WTC11 (cell line): ENCODE measurements at regions of chr10 and their contacts with region 1.

Region 1: DNA sequence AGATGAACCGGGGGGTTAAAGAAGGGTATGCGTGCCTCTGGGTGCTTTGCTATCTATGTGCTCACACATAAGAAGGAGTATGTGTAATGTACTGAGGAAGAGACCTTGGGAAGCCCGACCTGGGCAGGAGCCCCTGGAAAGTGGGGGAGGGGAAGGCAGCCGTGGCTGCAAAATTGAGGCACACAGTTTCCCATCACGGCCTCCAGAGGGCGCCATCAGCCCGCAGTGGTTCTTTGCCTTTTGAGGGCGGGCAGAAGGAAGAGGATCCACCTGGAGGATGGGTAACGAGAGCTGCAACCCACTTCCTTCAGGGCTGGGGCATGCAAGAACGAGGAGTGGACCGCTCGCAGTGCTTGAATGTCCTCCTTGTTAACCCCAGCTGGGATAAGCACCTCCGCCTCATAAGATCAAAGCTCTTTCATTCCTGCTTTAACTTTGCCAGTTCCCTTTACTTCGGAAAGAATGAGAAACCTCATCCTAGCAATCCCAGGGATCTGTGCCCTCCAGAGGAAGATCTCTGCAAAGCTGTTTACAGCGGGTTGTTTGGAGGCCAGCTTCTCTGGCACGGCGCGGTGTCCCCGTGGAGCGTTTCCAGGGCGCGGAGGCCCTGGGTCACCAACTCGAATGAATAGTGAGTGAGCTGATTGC is 77.9 kb downstream of the PCGF5 start:
- DNase-seq: peak; percentile 86
- ATAC-seq: peak; percentile 95
- H3K4me3 Mint-ChIP-seq: peak overlapping the region; percentile 63
- H3K27ac Mint-ChIP-seq: peak overlapping the region; percentile 47; the same call in 1 of the 2 replicates
- H3K4me1 Mint-ChIP-seq: peaks cover 19% of the 10 kb centered on the region
- H3K27me3 Mint-ChIP-seq: no peaks in the 10 kb centered on the region; the same call in 1 of the 2 replicates
- CTCF ChIP-seq: peak; percentile 86

Region 2: GRCh38 chr10:91088300-91089140 is 209.8 kb before region 1 on chr10:
- CTCF ChIA-PET with region 1: interaction called, 11 read pairs
- POLR2A ChIA-PET with region 1: no interaction called
- DNase-seq: no peak
- ATAC-seq: peak; percentile 67
- H3K4me3 Mint-ChIP-seq: no peak overlapping the region
- H3K27ac Mint-ChIP-seq: no peak overlapping the region
- H3K4me1 Mint-ChIP-seq: no peaks in the 10 kb centered on the region
- H3K27me3 Mint-ChIP-seq: peaks cover 2% of the 10 kb centered on the region
- CTCF ChIP-seq: no peak

Region 3: DNA sequence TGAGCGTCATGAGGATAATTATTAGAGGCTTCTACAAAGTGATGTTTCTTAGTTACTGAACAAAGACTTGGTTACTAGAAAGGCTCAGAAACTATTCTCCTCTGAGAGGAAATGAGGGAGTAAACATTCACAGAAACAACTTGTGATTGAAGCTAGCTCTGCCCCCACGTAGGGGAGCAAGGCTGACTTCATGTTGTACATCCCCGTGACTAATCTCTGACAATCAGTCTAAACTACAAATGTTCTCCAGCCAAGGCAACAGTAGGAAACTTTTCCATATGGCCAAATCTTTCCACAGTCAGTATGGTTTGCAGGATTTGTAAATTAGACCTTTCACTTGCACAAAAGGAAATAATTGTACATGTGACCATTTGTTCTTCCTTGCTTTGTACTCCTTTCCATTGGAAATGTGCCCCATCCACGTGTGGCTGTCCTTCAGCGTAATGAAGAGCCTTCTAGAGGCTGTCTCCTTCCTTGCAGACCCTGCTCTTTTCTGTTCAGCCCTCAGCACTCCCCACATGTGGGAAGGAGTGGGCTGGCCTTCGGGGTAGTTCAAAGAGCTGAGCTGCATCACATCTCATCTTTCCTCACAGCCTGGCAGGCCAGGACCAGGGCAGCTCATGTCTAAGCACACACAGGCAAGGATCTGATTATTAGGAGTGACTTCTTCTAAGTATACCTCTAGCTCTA is 15.6 kb after region 1 on chr10:
- CTCF ChIA-PET with region 1: interaction called, 22 read pairs
- POLR2A ChIA-PET with region 1: interaction called, 3 read pairs
- DNase-seq: no peak
- ATAC-seq: peak; percentile 26; the same call in 1 of the 2 replicates
- H3K4me3 Mint-ChIP-seq: no peak overlapping the region
- H3K27ac Mint-ChIP-seq: no peak overlapping the region
- H3K4me1 Mint-ChIP-seq: no peaks in the 10 kb centered on the region
- H3K27me3 Mint-ChIP-seq: 0 out of 2 replicates have a peak, but pooled peaks cover 2% of the 10 kb centered on the region
- CTCF ChIP-seq: no peak

Region 4: GRCh38 chr10:91328320-91328984 is 30.1 kb after region 1 on chr10:
- CTCF ChIA-PET with region 1: no interaction called
- POLR2A ChIA-PET with region 1: no interaction called
- DNase-seq: no peak
- ATAC-seq: no peak
- H3K4me3 Mint-ChIP-seq: no peak overlapping the region
- H3K27ac Mint-ChIP-seq: no peak overlapping the region
- H3K4me1 Mint-ChIP-seq: no peaks in the 10 kb centered on the region
- H3K27me3 Mint-ChIP-seq: peaks cover 5% of the 10 kb centered on the region; the same call in 1 of the 2 replicates
- CTCF ChIP-seq: no peak

Region 5: DNA sequence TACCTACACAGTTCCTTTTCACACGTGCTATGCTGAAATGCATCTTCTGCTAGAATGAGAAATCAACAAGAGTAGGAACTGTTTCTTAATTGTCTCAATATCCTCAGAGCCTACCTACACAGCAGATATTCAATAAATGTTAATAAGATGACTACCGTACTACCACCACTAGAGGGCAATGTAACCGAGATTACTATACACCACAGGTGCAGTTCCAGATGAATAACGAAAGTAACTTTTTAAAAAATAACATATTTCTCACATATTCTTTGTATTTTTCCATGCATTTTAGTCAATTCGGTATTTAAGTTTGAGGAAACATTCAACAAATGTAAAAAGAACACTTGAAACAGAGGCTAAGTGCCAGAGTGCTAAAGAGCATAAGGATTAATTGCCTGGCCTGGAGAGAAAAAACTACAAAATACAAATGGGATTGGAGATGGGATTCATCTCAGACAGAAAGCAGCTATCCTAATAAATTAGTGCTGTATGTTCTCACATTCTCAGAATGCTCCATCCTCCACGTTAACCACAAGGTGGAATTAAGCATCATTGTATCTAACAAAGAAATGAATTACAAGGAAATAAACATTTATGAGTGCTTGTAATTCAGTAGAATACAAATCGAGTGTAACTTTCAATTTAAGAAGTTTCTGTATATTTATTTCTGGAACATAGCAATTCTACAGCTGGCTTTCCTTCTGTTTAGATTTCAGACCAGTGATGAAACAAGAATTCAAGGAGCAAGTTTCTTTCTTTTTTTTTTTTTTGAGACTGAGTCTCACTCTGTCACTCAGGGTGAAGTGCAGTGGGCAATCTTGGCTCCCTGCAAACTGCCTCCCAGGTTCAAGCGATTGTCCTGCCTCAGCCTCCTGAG is 91.5 kb after region 1 on chr10:
- CTCF ChIA-PET with region 1: interaction called, 10 read pairs
- POLR2A ChIA-PET with region 1: no interaction called
- DNase-seq: no peak
- ATAC-seq: peak; percentile 86
- H3K4me3 Mint-ChIP-seq: no peak overlapping the region
- H3K27ac Mint-ChIP-seq: no peak overlapping the region
- H3K4me1 Mint-ChIP-seq: 0 out of 2 replicates have a peak, but pooled peaks cover 4% of the 10 kb centered on the region
- H3K27me3 Mint-ChIP-seq: no peaks in the 10 kb centered on the region
- CTCF ChIP-seq: peak; percentile 51; the same call in 1 of the 2 replicates

Region 6: DNA sequence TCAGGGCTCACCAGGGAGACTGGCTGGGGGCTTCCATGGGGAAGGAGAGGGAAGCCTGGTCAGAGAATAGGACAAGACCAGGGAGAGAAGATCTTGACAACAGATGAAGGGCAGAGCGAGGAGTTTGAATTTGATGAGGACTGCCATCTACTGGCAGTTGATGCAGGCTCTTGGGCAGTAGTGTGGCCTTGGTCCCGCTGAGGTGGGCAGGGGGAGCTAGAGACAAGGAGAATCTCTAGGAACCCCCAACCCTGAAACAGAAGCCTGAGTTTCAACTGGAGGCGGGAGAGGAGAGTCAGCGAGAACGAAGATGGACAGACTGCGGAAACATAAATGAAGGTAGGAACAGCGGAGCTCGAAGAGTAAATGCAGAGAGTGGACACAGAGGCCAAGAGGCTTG is 253.5 kb after region 1 on chr10:
- CTCF ChIA-PET with region 1: interaction called, 62 read pairs
- POLR2A ChIA-PET with region 1: no interaction called
- DNase-seq: peak; percentile 73
- ATAC-seq: peak; percentile 97
- H3K4me3 Mint-ChIP-seq: peak overlapping the region; percentile 17; the same call in 1 of the 2 replicates
- H3K27ac Mint-ChIP-seq: no peak overlapping the region
- H3K4me1 Mint-ChIP-seq: peaks cover 9% of the 10 kb centered on the region
- H3K27me3 Mint-ChIP-seq: peaks cover 7% of the 10 kb centered on the region; the same call in 1 of the 2 replicates
- CTCF ChIP-seq: peak; percentile 46; the same call in 1 of the 2 replicates

Region 7: DNA sequence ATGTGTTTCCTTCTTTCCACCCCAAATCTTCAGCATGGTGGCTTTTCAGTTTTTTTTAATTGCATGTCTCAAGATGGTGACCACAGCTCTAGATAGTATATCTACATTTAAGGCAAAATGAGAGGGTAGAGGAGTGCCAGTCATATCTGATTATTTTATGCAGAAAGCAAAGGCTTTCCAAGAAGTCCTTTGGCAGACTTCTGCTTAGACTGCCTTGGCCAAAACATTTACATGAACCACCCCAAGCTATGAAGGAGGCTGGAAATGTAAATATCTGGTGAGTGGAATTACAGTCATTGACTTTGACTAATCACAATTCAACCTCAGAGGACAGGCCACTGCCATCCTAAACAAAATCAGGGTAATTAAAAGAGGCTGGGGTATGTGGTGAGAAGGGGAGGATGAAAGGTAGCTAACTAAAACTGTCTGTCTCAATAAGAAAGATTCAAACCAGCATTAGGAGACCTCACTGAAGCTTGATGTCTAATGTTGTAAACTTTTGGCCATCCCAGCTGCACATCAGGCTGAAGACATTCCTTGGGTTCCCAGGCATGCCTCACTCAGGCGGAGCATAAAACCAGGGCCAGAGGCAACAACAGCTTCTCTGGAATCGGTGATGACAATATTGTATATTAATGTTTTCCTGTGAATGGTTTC is 281.1 kb after region 1 on chr10:
- CTCF ChIA-PET with region 1: no interaction called
- POLR2A ChIA-PET with region 1: no interaction called
- DNase-seq: no peak
- ATAC-seq: no peak
- H3K4me3 Mint-ChIP-seq: no peak overlapping the region
- H3K27ac Mint-ChIP-seq: no peak overlapping the region
- H3K4me1 Mint-ChIP-seq: no peaks in the 10 kb centered on the region
- H3K27me3 Mint-ChIP-seq: peaks cover 4% of the 10 kb centered on the region; the same call in 1 of the 2 replicates
- CTCF ChIP-seq: no peak

Region 8: GRCh38 chr10:91745074-91745832 is 446.9 kb after region 1 on chr10:
- CTCF ChIA-PET with region 1: interaction called, 11 read pairs
- POLR2A ChIA-PET with region 1: no interaction called
- DNase-seq: peak; percentile 68
- ATAC-seq: peak; percentile 100
- H3K4me3 Mint-ChIP-seq: peak overlapping the region; percentile 55
- H3K27ac Mint-ChIP-seq: peak overlapping the region; percentile 69; the same call in 1 of the 2 replicates
- H3K4me1 Mint-ChIP-seq: peaks cover 10% of the 10 kb centered on the region
- H3K27me3 Mint-ChIP-seq: peaks cover 13% of the 10 kb centered on the region
- CTCF ChIP-seq: no peak